ENCODE measurements at regions of chr20 and their contacts with region 1.

Region 1: DNA sequence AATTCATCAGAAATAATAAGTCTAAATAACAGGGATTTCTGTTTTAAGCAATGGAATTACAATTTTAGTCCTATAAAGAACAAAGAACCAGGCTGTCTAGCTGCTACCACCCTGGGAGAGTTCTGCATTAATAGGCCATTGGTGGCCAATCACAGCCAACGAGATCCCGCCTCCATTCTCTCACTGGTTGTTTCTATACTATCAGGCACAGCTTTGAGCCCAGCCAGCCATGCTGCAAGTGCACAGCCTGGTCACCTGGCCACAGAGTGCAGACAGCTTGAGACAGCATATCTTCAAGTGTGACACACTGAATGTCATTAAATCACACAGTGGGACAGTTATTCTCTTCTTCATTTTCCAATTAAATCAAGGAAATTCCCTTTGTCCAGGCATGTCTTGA is 16.1 kb upstream of the RAB22A start:
- DNase-seq: no peak
- H3K4me3 ChIP-seq: no peak overlapping the region
- H3K27ac ChIP-seq: no peak overlapping the region
- H3K4me1 ChIP-seq: no peaks in the 10 kb centered on the region
- H3K27me3 ChIP-seq: no peaks in the 10 kb centered on the region
- CTCF ChIP-seq: no peak
- POLR2A ChIP-seq: no peak

Region 2: GRCh38 chr20:57718490-57719271 is 574.8 kb before region 1 on chr20:
- intact Hi-C with region 1: loop called (anchors 5 kb)
- DNase-seq: peak; percentile 97 to 98
- H3K4me3 ChIP-seq: peak overlapping the region; percentile 18 to 50 (median 41)
- H3K27ac ChIP-seq: peak overlapping the region in 1 of 2 donors; percentile 36
- H3K4me1 ChIP-seq: no peaks in the 10 kb centered on the region
- H3K27me3 ChIP-seq: no peaks in the 10 kb centered on the region
- CTCF ChIP-seq: no peak
- POLR2A ChIP-seq: no peak